ENCODE measurements at regions of chr15 and their contacts with region 1.

Region 1: DNA sequence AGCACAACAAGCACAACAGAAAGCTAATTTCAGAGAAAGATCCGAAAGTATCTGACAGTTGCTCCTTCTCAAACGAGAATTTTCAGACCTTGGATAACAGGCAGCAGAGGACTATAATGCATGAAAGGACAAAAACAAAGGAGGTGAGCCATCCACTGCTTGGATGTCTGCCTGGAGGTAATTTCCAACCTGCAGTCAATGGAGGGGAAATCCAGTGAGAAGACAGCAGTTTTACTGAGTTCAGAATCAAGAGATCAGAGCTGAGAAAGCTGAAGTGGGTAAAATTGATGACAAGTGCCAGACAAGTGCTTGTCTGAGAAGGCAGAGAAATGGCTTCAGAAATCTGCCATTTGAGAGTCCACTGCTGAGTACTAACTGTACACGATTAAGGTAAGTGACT is 22.1 kb downstream of the UBE3A start:
- DNase-seq: no peak
- ATAC-seq: no peak
- H3K4me3 ChIP-seq: no peak overlapping the region
- H3K27ac ChIP-seq: no peak overlapping the region
- H3K4me1 ChIP-seq: no peaks in the 10 kb centered on the region
- H3K27me3 ChIP-seq: no peaks in the 10 kb centered on the region
- CTCF ChIP-seq: no peak
- POLR2A ChIP-seq: no peak
- RAD21 ChIP-seq: no peak

Region 2: GRCh38 chr15:25362545-25362944 is 54.1 kb before region 1 on chr15:
- CTCF ChIA-PET with region 1: no interaction called
- POLR2A ChIA-PET with region 1: no interaction called
- RAD21 ChIA-PET with region 1: no interaction called
- intact Hi-C with region 1: no loop called
- DNase-seq: no peak
- ATAC-seq: no peak
- H3K4me3 ChIP-seq: no peak overlapping the region
- H3K27ac ChIP-seq: no peak overlapping the region
- H3K4me1 ChIP-seq: no peaks in the 10 kb centered on the region
- H3K27me3 ChIP-seq: no peaks in the 10 kb centered on the region
- CTCF ChIP-seq: no peak
- POLR2A ChIP-seq: no peak
- RAD21 ChIP-seq: no peak

Region 3: GRCh38 chr15:25378501-25378901 is 38.2 kb before region 1 on chr15:
- CTCF ChIA-PET with region 1: no interaction called
- POLR2A ChIA-PET with region 1: no interaction called
- RAD21 ChIA-PET with region 1: no interaction called
- intact Hi-C with region 1: loop called (anchors 5 kb)
- DNase-seq: no peak
- ATAC-seq: no peak
- H3K4me3 ChIP-seq: no peak overlapping the region
- H3K27ac ChIP-seq: no peak overlapping the region
- H3K4me1 ChIP-seq: no peaks in the 10 kb centered on the region
- H3K27me3 ChIP-seq: no peaks in the 10 kb centered on the region
- CTCF ChIP-seq: no peak
- POLR2A ChIP-seq: no peak
- RAD21 ChIP-seq: no peak

Region 4: DNA sequence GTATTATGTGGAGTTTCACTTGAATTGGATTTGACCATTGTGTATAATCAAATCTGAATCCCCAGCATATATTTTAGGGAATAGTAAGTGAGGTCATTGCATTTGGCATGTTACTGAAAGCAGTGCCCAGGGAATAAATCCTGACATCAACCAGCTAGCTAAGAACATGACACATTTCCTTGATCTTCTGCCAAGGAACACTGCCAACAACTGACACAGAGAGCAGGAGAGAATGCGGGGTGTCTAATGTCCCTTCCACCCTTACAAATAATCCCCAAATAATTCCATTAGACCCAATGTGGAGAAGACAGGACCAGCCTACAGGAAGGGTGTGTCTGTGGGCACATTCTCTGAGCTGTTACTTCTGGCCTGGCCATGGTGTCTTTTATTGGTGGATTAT is 52.7 kb after region 1 on chr15:
- CTCF ChIA-PET with region 1: no interaction called
- POLR2A ChIA-PET with region 1: no interaction called
- RAD21 ChIA-PET with region 1: no interaction called
- intact Hi-C with region 1: no loop called
- DNase-seq: no peak
- ATAC-seq: no peak
- H3K4me3 ChIP-seq: no peak overlapping the region
- H3K27ac ChIP-seq: no peak overlapping the region
- H3K4me1 ChIP-seq: no peaks in the 10 kb centered on the region
- H3K27me3 ChIP-seq: no peaks in the 10 kb centered on the region
- CTCF ChIP-seq: no peak
- POLR2A ChIP-seq: no peak
- RAD21 ChIP-seq: no peak